PC-9 (cell line): ENCODE measurements at regions of chr3 and their contacts with region 1.

Region 1: GRCh38 chr3:65785065-65785645 is 253.6 kb downstream of the MAGI1 start:
- DNase-seq: peak in 1 of 2 experiments; percentile 39
- H3K4me3 ChIP-seq: no peak overlapping the region
- H3K27ac ChIP-seq: no peak overlapping the region
- H3K4me1 ChIP-seq: no peaks in the 10 kb centered on the region
- H3K27me3 ChIP-seq: no peaks in the 10 kb centered on the region
- CTCF ChIP-seq: peak; percentile 79

Region 2: DNA sequence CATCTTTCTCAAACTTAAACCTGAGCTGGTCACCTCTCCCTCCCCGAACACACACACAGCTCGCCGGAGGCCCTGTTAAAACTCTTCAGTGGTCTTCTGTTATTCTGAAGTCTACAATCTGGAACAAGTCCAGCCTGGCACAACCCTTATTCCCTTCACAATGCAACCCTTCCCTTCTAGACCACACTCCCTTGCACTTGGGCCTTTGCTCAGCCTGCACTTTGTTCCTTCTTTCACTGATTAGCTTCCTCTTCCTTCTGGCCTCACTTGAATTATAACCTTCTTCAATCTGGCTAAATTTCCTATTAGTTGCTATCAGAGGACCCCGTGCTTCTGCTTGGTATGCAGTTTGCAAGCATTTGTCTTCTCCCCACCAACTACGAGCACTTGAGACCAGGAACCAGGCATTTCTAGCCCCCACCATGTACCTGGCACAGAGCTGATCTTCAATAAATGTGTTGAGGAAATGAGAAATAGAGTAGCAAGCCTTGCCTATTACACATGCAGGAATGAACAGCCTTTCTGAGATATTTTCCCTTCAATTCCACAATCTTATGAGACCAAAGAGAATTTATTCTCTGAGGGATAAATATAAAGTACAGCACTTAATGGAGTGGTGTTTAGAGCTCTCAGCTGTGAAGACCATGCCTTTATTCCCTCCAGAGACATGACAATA is 434.2 kb before region 1 on chr3:
- CTCF ChIA-PET with region 1: interaction called, 11 read pairs
- POLR2A ChIA-PET with region 1: no interaction called
- intact Hi-C with region 1: no loop called
- DNase-seq: no peak
- H3K4me3 ChIP-seq: no peak overlapping the region
- H3K27ac ChIP-seq: no peak overlapping the region
- H3K4me1 ChIP-seq: no peaks in the 10 kb centered on the region
- H3K27me3 ChIP-seq: no peaks in the 10 kb centered on the region
- CTCF ChIP-seq: no peak

Region 3: DNA sequence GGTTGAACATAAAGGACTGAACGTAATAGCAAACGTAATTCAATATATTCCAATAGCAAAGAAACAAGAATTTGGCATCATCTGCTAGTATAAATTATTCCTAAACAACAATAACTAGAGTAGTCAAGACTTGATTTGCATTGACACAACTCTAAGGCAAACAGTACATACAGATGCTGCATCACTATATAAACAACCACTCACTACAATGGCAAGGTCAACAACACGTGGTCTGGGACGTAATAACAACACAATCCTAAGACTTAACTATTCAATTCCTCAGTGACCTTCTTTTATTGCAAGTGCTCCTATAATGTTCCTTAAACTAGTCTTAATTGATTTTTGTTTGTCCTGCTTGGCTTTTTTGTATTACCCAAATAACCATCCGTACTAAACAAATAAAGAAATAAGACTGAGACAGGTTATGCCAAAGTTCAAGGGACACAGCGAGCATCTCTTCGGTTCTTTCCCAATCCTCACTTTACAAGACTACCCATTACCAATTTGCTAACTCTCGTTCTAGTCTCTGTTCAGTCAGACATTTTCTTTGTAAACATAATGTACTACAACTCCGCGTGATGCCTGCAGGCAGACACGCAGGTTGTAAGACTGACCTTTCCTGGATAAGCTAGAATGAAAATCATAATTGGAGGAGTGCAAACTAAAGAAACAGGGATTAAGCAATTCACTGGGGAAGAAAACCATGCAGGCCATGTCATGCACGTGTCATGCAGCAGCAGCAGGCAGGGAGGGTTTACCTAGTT is 337.7 kb before region 1 on chr3:
- CTCF ChIA-PET with region 1: interaction called, 23 read pairs
- POLR2A ChIA-PET with region 1: no interaction called
- intact Hi-C with region 1: no loop called
- DNase-seq: no peak
- H3K4me3 ChIP-seq: no peak overlapping the region
- H3K27ac ChIP-seq: no peak overlapping the region
- H3K4me1 ChIP-seq: no peaks in the 10 kb centered on the region
- H3K27me3 ChIP-seq: no peaks in the 10 kb centered on the region
- CTCF ChIP-seq: no peak

Region 4: GRCh38 chr3:66038726-66039589 is 253.8 kb after region 1 on chr3 and contains the start of gene MAGI1:
- CTCF ChIA-PET with region 1: no interaction called
- POLR2A ChIA-PET with region 1: interaction called, 4 read pairs
- intact Hi-C with region 1: loop called (anchors 2 kb)
- DNase-seq: peak; percentile 75 to 94
- H3K4me3 ChIP-seq: peak within 1 kb of the TSS; percentile 82
- H3K27ac ChIP-seq: peak within 1 kb of the TSS; percentile 77
- H3K4me1 ChIP-seq: peaks cover 28% of the 10 kb centered on the region
- H3K27me3 ChIP-seq: no peaks in the 10 kb centered on the region
- CTCF ChIP-seq: no peak
- total RNA-seq, gene MAGI1: 23.3 and 24.1 TPM in 2 replicates

Region 5: GRCh38 chr3:66138336-66139313 is 353.5 kb after region 1 on chr3:
- CTCF ChIA-PET with region 1: no interaction called
- POLR2A ChIA-PET with region 1: no interaction called
- intact Hi-C with region 1: loop called (anchors 1 kb)
- DNase-seq: peak; percentile 53 to 57
- H3K4me3 ChIP-seq: no peak overlapping the region
- H3K27ac ChIP-seq: no peak overlapping the region
- H3K4me1 ChIP-seq: peaks cover 14% of the 10 kb centered on the region
- H3K27me3 ChIP-seq: no peaks in the 10 kb centered on the region
- CTCF ChIP-seq: peak; percentile 77

Region 6: GRCh38 chr3:66195347-66195783 is 410.2 kb after region 1 on chr3:
- CTCF ChIA-PET with region 1: no interaction called
- POLR2A ChIA-PET with region 1: no interaction called
- intact Hi-C with region 1: loop called (anchors 2 kb)
- DNase-seq: peak; percentile 41 to 55
- H3K4me3 ChIP-seq: peak overlapping the region; percentile 66
- H3K27ac ChIP-seq: no peak overlapping the region
- H3K4me1 ChIP-seq: no peaks in the 10 kb centered on the region; the same call in 1 of the 2 replicates
- H3K27me3 ChIP-seq: no peaks in the 10 kb centered on the region
- CTCF ChIP-seq: no peak; the same call in 1 of the 2 replicates